B cell (primary cell): ENCODE measurements at regions of chr6 and their contacts with region 1.

Region 1: GRCh38 chr6:188821-189655 is 103.2 kb upstream of the DUSP22 start:
- DNase-seq: peak; percentile 81
- ATAC-seq: peak; percentile 68
- H3K4me3 ChIP-seq: no peak overlapping the region
- H3K4me3 Mint-ChIP-seq: no peak overlapping the region
- H3K27ac ChIP-seq: no peak overlapping the region
- H3K27ac Mint-ChIP-seq: peak overlapping the region; percentile 10
- H3K4me1 ChIP-seq: peaks cover 62 to 80% of the 10 kb centered on the region in 2 donors
- H3K4me1 Mint-ChIP-seq: peaks cover 75% of the 10 kb centered on the region
- H3K27me3 ChIP-seq: no peaks in the 10 kb centered on the region
- H3K27me3 Mint-ChIP-seq: no peaks in the 10 kb centered on the region
- CTCF ChIP-seq: peak; percentile 82

Region 2: GRCh38 chr6:217048-217659 is 28.1 kb after region 1 on chr6:
- CTCF ChIA-PET with region 1: interaction called, 49 read pairs
- POLR2A ChIA-PET with region 1: no interaction called
- intact Hi-C with region 1: loop called (anchors 2 kb)
- DNase-seq: peak; percentile 49
- ATAC-seq: no peak
- H3K4me3 ChIP-seq: no peak overlapping the region
- H3K4me3 Mint-ChIP-seq: peak overlapping the region; percentile 58
- H3K27ac ChIP-seq: no peak overlapping the region
- H3K27ac Mint-ChIP-seq: peak overlapping the region; percentile 44
- H3K4me1 ChIP-seq: peaks cover 43 to 62% of the 10 kb centered on the region in 2 donors
- H3K4me1 Mint-ChIP-seq: peaks cover 69% of the 10 kb centered on the region
- H3K27me3 ChIP-seq: peaks cover 0 to 2% (median 0%) of the 10 kb centered on the region in 4 experiments
- H3K27me3 Mint-ChIP-seq: no peaks in the 10 kb centered on the region
- CTCF ChIP-seq: peak; percentile 50

Region 3: GRCh38 chr6:391559-392440 is 202.8 kb after region 1 on chr6 and contains the start of gene IRF4:
- CTCF ChIA-PET with region 1: interaction called, 48 read pairs
- POLR2A ChIA-PET with region 1: interaction called, 4 read pairs
- intact Hi-C with region 1: loop called (anchors 1 kb)
- DNase-seq: peak; percentile 90
- ATAC-seq: peak; percentile 70
- H3K4me3 ChIP-seq: peak within 1 kb of the TSS; percentile 63 to 98 (median 93)
- H3K4me3 Mint-ChIP-seq: peak within 1 kb of the TSS; percentile 95
- H3K27ac ChIP-seq: peak within 1 kb of the TSS; percentile 71 to 82
- H3K27ac Mint-ChIP-seq: peak within 1 kb of the TSS; percentile 99
- H3K4me1 ChIP-seq: peaks cover 35 to 43% of the 10 kb centered on the region in 2 donors
- H3K4me1 Mint-ChIP-seq: peaks cover 51% of the 10 kb centered on the region
- H3K27me3 ChIP-seq: no peaks in the 10 kb centered on the region
- H3K27me3 Mint-ChIP-seq: no peaks in the 10 kb centered on the region
- CTCF ChIP-seq: no peak
- total RNA-seq, gene IRF4: 129 and 142 TPM in 2 replicates

Region 4: GRCh38 chr6:408599-409102 is 219.6 kb after region 1 on chr6:
- CTCF ChIA-PET with region 1: interaction called, 20 read pairs
- POLR2A ChIA-PET with region 1: no interaction called
- intact Hi-C with region 1: loop called (anchors 2 kb)
- DNase-seq: peak; percentile 60
- ATAC-seq: no peak
- H3K4me3 ChIP-seq: no peak overlapping the region
- H3K4me3 Mint-ChIP-seq: no peak overlapping the region
- H3K27ac ChIP-seq: peak overlapping the region in 1 of 2 donors; percentile 89
- H3K27ac Mint-ChIP-seq: peak overlapping the region; percentile 81
- H3K4me1 ChIP-seq: peaks cover 17 to 19% of the 10 kb centered on the region in 2 donors
- H3K4me1 Mint-ChIP-seq: peaks cover 44% of the 10 kb centered on the region
- H3K27me3 ChIP-seq: no peaks in the 10 kb centered on the region
- H3K27me3 Mint-ChIP-seq: no peaks in the 10 kb centered on the region
- CTCF ChIP-seq: peak; percentile 74

Region 5: GRCh38 chr6:436308-437036 is 247.4 kb after region 1 on chr6:
- CTCF ChIA-PET with region 1: no interaction called
- POLR2A ChIA-PET with region 1: no interaction called
- intact Hi-C with region 1: no loop called
- DNase-seq: no peak
- ATAC-seq: no peak
- H3K4me3 ChIP-seq: no peak overlapping the region
- H3K4me3 Mint-ChIP-seq: no peak overlapping the region
- H3K27ac ChIP-seq: no peak overlapping the region
- H3K27ac Mint-ChIP-seq: no peak overlapping the region
- H3K4me1 ChIP-seq: peaks cover 12 to 16% of the 10 kb centered on the region in 2 donors
- H3K4me1 Mint-ChIP-seq: peaks cover 16% of the 10 kb centered on the region
- H3K27me3 ChIP-seq: no peaks in the 10 kb centered on the region
- H3K27me3 Mint-ChIP-seq: no peaks in the 10 kb centered on the region
- CTCF ChIP-seq: no peak

Region 6: DNA sequence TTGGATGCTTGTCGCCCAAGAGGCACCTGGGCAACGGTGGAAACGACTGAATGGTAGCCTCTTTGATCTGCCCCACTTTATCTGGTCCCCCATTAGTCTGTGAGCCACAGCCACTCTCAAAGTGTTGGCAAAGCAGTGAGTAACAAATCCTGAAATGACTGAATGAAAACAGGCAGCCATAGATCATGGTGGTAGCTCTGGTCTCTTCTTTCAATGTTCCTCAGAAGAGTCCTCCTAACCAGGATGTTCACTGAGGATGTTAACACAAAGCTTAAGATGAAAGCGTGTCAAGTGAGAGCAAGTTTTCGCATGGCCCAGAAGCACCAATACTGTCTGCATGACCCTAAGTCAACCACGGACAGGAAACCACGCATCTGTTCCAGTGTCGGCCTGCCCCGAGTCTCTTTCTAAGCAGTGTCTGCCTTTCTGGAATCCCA is 309.8 kb after region 1 on chr6:
- CTCF ChIA-PET with region 1: no interaction called
- POLR2A ChIA-PET with region 1: no interaction called
- intact Hi-C with region 1: no loop called
- DNase-seq: peak; percentile 19
- ATAC-seq: no peak
- H3K4me3 ChIP-seq: no peak overlapping the region
- H3K4me3 Mint-ChIP-seq: peak overlapping the region; percentile 17
- H3K27ac ChIP-seq: peak overlapping the region in 1 of 2 donors; percentile 16
- H3K27ac Mint-ChIP-seq: peak overlapping the region; percentile 22
- H3K4me1 ChIP-seq: peaks cover 22 to 23% of the 10 kb centered on the region in 2 donors
- H3K4me1 Mint-ChIP-seq: peaks cover 40% of the 10 kb centered on the region
- H3K27me3 ChIP-seq: no peaks in the 10 kb centered on the region
- H3K27me3 Mint-ChIP-seq: no peaks in the 10 kb centered on the region
- CTCF ChIP-seq: no peak

Region 7: GRCh38 chr6:1396952-1397868 is 1208.2 kb after region 1 on chr6:
- CTCF ChIA-PET with region 1: no interaction called
- POLR2A ChIA-PET with region 1: no interaction called
- intact Hi-C with region 1: loop called (anchors 5 kb)
- DNase-seq: peak; percentile 80
- ATAC-seq: peak; percentile 43
- H3K4me3 ChIP-seq: no peak overlapping the region
- H3K4me3 Mint-ChIP-seq: no peak overlapping the region
- H3K27ac ChIP-seq: no peak overlapping the region
- H3K27ac Mint-ChIP-seq: no peak overlapping the region
- H3K4me1 ChIP-seq: peaks cover 17 to 19% of the 10 kb centered on the region in 2 donors
- H3K4me1 Mint-ChIP-seq: peaks cover 9% of the 10 kb centered on the region
- H3K27me3 ChIP-seq: peaks cover 0 to 65% (median 40%) of the 10 kb centered on the region in 4 experiments
- H3K27me3 Mint-ChIP-seq: peaks cover 57% of the 10 kb centered on the region
- CTCF ChIP-seq: peak; percentile 99